ENCODE measurements at regions of chr4 and their contacts with region 1.

Region 1: DNA sequence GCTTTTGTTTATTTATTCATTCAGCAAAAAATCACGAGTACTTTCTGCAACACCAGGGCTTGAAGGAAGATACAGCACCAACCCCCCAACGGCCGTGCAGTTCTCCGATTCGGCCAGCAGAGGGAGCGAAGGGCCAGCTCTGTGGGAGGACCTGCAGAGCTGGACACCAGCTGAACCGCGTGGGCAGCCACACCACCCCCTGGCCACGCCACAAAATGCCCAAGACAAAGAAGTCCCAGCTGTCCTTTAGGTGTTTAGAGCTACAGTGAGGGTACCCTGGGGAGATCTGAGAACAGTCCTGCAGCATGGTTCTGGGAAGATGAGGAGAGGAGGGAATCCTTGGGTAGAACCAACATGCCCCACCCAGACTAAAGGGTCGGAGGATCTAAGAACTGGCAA is 83.1 kb downstream of the RELL1 start:
- DNase-seq: peak; percentile 74

Region 2: GRCh38 chr4:37737466-37737865 is 134.4 kb after region 1 on chr4:
- CTCF ChIA-PET with region 1: no interaction called
- POLR2A ChIA-PET with region 1: no interaction called
- DNase-seq: no peak

Region 3: GRCh38 chr4:37802068-37802666 is 199.1 kb after region 1 on chr4:
- CTCF ChIA-PET with region 1: interaction called, 14 read pairs
- POLR2A ChIA-PET with region 1: no interaction called
- DNase-seq: peak; percentile 46

Measured in HEK293T (cell line).